ENCODE measurements at regions of chr3 and their contacts with region 1.

Region 1: GRCh38 chr3:14651440-14652251 is at the start of gene CCDC174:
- DNase-seq: peak; percentile 97
- H3K4me3 ChIP-seq: peak within 1 kb of the TSS; percentile 98
- H3K27ac ChIP-seq: peak within 1 kb of the TSS; percentile 88
- H3K27me3 ChIP-seq: peaks cover 2% of the 10 kb centered on the region
- CTCF ChIP-seq: 0 out of 2 replicates have a peak, but pooled peaks have one; percentile 5
- polyA plus RNA-seq, gene CCDC174: 10.0 and 13.9 TPM in 2 replicates

Region 2: DNA sequence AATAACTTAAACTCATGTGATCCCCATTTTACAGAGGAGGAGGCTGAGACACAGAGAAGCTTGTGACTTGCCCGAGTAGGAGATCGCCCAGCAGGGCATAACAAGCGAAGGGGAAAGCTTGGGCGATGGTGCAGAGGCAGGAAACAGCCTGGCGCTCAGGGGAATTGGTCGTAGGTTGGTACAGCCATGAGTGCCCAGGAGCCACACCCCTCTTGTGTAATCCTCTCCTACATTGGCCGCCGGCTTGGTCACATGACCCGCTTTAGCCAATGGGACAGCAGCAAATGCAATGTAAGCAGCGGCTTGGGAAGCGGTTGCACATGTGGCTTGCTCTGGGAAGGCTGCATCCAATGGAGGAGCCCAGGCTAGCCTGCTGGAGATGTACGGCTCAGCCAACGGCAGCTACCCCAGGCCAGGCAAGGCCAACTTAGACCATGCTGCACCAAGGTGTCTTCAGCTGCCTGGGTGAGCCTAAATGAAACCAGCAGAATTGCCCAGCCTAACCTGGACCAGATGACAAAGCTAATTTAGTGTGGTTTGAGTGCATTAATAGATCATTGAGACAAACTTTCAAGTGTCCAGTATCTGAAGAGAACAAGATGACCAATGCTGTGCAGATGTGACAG is 299.5 kb before region 1 on chr3:
- CTCF ChIA-PET with region 1: no interaction called
- POLR2A ChIA-PET with region 1: no interaction called
- DNase-seq: no peak
- H3K4me3 ChIP-seq: no peak overlapping the region
- H3K27ac ChIP-seq: no peak overlapping the region
- H3K27me3 ChIP-seq: peaks cover 16% of the 10 kb centered on the region
- CTCF ChIP-seq: no peak

Region 3: GRCh38 chr3:14672588-14672987 is 20.9 kb after region 1 on chr3:
- CTCF ChIA-PET with region 1: interaction called, 21 read pairs
- POLR2A ChIA-PET with region 1: no interaction called
- DNase-seq: no peak
- H3K4me3 ChIP-seq: no peak overlapping the region
- H3K27ac ChIP-seq: no peak overlapping the region
- H3K27me3 ChIP-seq: no peaks in the 10 kb centered on the region
- CTCF ChIP-seq: no peak

Region 4: DNA sequence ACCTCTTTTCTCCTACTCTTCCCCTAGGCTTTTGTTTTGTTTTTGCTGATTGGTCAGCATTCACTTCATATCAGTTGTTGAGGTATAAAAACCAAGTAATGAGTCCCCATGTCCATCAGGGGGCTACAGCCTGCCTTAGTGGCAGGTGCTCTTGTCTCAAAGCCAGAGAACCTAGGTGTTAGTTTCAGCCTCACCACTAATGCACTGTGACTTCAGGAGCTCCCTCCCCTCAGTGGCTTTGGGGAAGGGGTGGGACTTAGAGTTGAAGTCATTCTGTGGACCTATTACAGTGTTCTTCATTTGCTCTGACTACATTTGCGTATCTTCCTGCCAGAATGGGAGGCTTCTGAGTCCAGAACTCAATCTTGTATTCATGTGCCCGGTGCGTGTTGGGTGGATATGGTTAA is 337.3 kb after region 1 on chr3:
- CTCF ChIA-PET with region 1: no interaction called
- POLR2A ChIA-PET with region 1: interaction called, 11 read pairs
- DNase-seq: no peak
- H3K4me3 ChIP-seq: no peak overlapping the region
- H3K27ac ChIP-seq: no peak overlapping the region
- H3K27me3 ChIP-seq: no peaks in the 10 kb centered on the region
- CTCF ChIP-seq: no peak

Measured in AG04450 (cell line).